Gastrocnemius medialis (tissue), 4 donors: ENCODE measurements at regions of chr6 and their contacts with region 1.

Region 1: DNA sequence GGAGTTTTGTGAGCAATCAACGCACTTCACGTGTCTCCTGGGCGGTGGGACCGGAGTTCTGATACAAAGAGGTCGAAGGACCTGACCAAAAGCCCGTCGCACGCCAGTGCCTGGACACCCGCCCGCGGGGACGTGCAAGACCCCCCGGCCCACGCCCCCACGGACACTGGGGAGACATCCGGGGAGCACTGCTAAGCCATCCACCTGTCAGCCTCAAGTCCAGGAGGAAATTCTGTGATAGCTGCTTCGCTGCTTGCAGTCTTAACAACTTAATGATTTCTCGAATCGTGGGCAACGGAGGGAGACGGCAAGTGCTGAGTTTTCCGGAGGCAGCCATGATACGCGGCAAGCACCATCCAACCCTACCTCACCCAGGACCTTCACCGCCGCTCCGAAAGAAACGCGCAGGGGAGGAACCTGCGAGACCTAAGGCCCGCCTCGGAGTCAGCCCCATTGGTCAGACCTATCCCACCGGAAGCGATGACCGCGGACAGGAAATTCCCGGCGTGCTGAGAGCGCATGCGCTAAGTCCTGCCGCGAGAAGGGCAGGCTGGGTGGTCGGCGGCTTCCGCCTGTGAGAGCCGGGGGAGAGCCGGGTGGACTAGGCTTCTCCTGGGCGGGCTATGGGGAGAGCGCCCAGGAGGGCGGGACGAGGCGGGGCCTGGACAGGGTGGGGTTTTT is at the start of gene TFB1M:
- DNase-seq: peak; percentile 98
- ATAC-seq: peak; percentile 90 to 91
- H3K4me3 ChIP-seq: peak within 1 kb of the TSS; percentile 84 to 95 (median 88)
- H3K27ac ChIP-seq: peak within 1 kb of the TSS; percentile 87 to 93 (median 91)
- H3K4me1 ChIP-seq: peaks cover 3 to 11% of the 10 kb centered on the region in 2 donors
- H3K27me3 ChIP-seq: no peaks in the 10 kb centered on the region
- CTCF ChIP-seq: no peak
- POLR2A ChIP-seq: peak; percentile 94
- total RNA-seq, gene TFB1M: 13.4 to 34.4 (median 29.2) TPM

Region 2: DNA sequence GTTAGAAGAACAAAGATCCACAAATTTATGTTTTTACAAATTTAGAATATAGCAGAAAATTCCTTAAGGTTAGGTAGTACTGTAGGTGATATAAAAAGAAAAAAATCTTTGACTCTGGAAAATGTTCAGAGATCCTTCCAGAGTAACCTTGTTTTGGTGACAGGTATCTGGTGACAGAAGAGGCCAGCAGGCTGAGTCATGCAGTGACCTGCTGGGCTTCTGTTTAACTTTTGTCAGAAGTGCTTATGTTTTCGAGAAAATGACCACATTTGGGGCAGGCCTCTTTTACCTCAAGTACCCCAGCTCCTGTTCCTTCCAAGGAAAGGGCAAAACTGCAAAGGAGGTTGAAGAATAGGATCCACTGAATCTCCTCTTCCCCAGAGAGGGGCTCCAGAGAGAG is 60.9 kb before region 1 on chr6:
- in situ Hi-C with region 1: no loop called
- intact Hi-C with region 1: loop called (anchors 5 kb)
- DNase-seq: peak; percentile 21 to 45
- ATAC-seq: peak; percentile 88 to 89
- H3K4me3 ChIP-seq: no peak overlapping the region
- H3K27ac ChIP-seq: peak overlapping the region; percentile 79 to 85 (median 81)
- H3K4me1 ChIP-seq: peaks cover 18 to 19% of the 10 kb centered on the region in 2 donors
- H3K27me3 ChIP-seq: no peaks in the 10 kb centered on the region
- CTCF ChIP-seq: no peak
- POLR2A ChIP-seq: no peak

Region 3: GRCh38 chr6:155461556-155461955 is 147.3 kb after region 1 on chr6:
- in situ Hi-C with region 1: no loop called
- intact Hi-C with region 1: no loop called
- DNase-seq: no peak
- ATAC-seq: no peak
- H3K4me3 ChIP-seq: no peak overlapping the region
- H3K27ac ChIP-seq: no peak overlapping the region
- H3K4me1 ChIP-seq: no peaks in the 10 kb centered on the region
- H3K27me3 ChIP-seq: no peaks in the 10 kb centered on the region
- CTCF ChIP-seq: no peak
- POLR2A ChIP-seq: no peak

Region 4: DNA sequence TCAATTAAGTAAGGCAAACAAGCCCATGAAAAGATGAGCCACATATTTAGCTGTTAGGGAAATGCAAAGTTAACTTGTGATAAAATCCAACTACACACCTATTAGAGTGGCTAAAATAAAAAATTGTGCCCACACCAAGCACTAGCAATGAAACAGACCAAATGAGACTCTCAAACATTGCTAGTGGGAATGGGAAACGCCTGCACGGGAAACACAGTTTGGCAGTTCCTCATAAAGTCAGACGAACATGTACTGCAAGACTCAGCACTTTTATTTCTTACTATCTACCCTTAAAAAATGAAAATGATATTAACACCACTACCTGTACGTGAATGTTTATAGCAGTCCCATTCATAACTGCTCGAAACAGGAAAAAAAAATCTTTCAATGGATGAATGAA is 533.5 kb after region 1 on chr6:
- in situ Hi-C with region 1: no loop called
- intact Hi-C with region 1: no loop called
- DNase-seq: no peak
- ATAC-seq: no peak
- H3K4me3 ChIP-seq: no peak overlapping the region
- H3K27ac ChIP-seq: no peak overlapping the region
- H3K4me1 ChIP-seq: no peaks in the 10 kb centered on the region
- H3K27me3 ChIP-seq: no peaks in the 10 kb centered on the region
- CTCF ChIP-seq: no peak
- POLR2A ChIP-seq: no peak